ENCODE measurements at regions of chr5 and their contacts with region 1.

Region 1: DNA sequence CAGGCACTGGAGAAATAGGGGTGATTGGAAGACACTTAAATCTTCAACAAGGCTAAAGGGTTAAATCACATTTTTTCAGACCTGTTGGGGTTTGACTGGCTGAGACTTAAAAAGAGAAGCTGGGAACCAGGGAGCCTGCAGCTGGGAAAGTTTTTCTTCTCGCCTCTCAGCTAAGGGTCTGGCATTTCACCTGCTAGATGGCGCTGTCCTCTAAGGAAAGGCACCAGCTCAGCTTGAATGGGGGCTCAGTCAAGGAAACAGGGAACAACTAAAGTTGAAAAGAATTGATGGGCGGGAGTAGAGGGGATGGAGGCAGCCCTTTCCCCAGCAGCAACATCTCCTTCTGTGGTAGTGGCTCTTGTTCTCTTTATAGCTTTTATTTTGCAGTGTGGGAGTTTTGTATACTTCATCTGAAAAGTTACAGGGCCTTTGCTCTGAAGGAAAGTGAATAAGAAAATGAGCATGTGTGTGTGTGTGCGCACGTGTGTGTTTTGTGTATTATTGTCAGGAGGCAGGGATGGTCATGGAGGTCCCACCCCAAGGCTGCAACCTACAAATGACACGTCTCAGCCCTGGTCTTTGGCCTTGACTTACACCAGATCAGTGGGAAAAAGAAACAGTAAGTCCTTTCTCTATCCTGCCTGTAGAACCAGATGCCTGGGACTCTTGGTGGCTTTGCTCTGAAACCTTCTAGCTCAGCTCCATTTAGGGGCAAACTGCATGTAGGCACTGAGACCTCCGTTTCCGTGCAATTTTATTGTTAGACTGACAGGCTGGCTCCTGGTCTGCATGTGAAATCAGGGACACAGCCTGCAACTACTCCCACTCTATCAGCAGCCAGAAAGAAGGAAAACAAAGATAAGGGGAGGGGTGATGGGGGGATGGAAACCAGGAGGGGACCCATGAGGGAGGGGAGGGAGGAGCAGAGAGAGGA is 316.2 kb upstream of the CLINT1 start:
- DNase-seq: peak; percentile 29 to 72 (median 65)
- H3K4me3 ChIP-seq: no peak overlapping the region
- H3K27ac ChIP-seq: no peak overlapping the region
- H3K27me3 ChIP-seq: peaks cover 0 to 26% (median 5%) of the 10 kb centered on the region in 45 donors
- CTCF ChIP-seq: peak; percentile 34 to 86 (median 74)

Region 2: DNA sequence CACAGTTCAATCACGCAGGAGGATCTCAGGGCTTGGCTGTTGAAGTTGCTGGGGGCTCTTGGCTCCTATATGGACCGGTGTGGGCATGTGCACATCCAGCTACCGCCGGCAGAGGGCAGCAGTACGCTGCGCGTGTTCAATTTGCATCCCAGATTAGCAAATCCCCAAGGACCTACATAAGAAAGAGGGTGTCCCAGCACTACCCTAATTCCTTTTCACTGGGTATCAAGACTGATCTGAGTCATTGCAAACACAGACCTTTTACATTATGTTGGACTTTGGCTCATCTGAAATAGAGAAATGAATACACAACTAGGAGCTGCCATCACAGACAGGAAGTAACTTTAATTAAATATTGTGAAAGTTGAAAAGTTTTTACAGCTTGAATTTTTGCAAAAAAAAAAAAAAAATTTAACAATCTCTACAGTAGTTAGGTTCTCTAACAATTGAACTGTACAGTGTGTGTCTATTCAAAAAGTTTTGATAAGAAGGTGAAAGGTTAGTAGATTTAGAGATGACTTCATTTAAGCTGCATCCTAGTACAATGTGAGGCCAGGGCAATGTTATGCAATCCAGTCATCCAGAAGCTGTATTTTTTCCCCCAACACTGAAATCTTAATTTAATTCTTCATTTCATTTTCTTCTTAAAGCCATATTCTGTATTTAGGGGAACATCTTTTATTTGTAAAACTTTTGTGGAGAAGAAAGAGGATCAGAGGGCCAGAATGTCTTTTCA is 520.6 kb after region 1 on chr5:
- intact Hi-C with region 1: loop called in 1 of 2 experiments (anchors 5 kb)
- DNase-seq: peak; percentile 62 to 87 (median 76)
- H3K4me3 ChIP-seq: no peak overlapping the region
- H3K27ac ChIP-seq: no peak overlapping the region
- H3K27me3 ChIP-seq: peaks cover 0 to 27% (median 9%) of the 10 kb centered on the region in 45 donors
- CTCF ChIP-seq: peak; percentile 90 to 100 (median 97)

Measured in dorsolateral prefrontal cortex (tissue), 120 donors.